ENCODE measurements at regions of chr2 and their contacts with region 1.

Region 1: DNA sequence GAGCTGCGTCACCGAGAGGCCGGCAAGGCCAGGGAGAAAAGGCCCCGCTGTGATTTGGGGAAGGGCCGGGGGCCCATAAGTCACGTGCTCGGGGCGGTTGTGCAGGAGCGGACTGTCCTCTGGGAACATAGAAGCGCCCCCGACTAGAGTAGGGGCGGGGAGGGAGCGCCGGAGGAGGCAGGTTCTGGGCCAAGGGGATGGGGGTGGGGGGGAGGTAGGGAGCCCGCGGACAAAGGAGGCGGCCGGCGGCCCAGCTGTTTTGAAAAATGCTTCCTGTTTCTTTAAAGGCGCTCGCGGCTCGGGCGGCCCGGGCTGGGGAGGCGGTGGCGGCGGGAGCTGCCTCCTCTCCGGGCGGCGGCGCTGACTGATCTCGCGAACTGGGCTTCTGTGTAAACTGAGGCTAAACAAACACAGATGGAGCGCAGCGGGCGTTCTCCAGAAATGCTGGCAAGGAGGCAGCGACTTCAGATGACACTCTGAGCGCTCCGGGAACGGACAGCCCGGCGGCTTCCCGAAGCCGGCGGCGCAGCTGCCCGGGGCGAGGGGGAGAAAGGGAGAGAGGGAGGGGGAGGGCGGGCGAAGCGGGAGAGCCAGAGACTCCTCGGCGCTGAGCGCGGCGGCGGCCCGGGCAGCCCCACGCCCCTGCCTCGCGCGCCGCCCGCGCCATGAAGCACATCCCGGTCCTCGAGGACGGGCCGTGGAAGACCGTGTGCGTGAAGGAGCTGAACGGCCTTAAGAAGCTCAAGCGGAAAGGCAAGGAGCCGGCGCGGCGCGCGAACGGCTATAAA is at the start of gene ATOH8:
- DNase-seq: peak; percentile 81 to 89
- H3K4me3 ChIP-seq: peak within 1 kb of the TSS; percentile 92 to 96
- H3K27ac ChIP-seq: peak within 1 kb of the TSS; percentile 96 to 97
- H3K4me1 ChIP-seq: peaks cover 0 to 86% (median 65%) of the 10 kb centered on the region in 4 donors
- H3K27me3 ChIP-seq: no peaks in the 10 kb centered on the region
- CTCF ChIP-seq: no peak

Region 2: GRCh38 chr2:85770369-85770768 is 16.6 kb after region 1 on chr2:
- intact Hi-C with region 1: loop called (anchors 2 kb)
- DNase-seq: no peak
- H3K4me3 ChIP-seq: no peak overlapping the region
- H3K27ac ChIP-seq: peak overlapping the region; percentile 82 to 87
- H3K4me1 ChIP-seq: peaks cover 0 to 95% (median 84%) of the 10 kb centered on the region in 4 donors
- H3K27me3 ChIP-seq: no peaks in the 10 kb centered on the region
- CTCF ChIP-seq: no peak